ENCODE measurements at regions of chr11 and their contacts with region 1.

Region 1: GRCh38 chr11:6682936-6683861 is at the start of gene MRPL17:
- DNase-seq: peak; percentile 99
- total RNA-seq, gene MRPL17: 39.5 TPM

Region 2: DNA sequence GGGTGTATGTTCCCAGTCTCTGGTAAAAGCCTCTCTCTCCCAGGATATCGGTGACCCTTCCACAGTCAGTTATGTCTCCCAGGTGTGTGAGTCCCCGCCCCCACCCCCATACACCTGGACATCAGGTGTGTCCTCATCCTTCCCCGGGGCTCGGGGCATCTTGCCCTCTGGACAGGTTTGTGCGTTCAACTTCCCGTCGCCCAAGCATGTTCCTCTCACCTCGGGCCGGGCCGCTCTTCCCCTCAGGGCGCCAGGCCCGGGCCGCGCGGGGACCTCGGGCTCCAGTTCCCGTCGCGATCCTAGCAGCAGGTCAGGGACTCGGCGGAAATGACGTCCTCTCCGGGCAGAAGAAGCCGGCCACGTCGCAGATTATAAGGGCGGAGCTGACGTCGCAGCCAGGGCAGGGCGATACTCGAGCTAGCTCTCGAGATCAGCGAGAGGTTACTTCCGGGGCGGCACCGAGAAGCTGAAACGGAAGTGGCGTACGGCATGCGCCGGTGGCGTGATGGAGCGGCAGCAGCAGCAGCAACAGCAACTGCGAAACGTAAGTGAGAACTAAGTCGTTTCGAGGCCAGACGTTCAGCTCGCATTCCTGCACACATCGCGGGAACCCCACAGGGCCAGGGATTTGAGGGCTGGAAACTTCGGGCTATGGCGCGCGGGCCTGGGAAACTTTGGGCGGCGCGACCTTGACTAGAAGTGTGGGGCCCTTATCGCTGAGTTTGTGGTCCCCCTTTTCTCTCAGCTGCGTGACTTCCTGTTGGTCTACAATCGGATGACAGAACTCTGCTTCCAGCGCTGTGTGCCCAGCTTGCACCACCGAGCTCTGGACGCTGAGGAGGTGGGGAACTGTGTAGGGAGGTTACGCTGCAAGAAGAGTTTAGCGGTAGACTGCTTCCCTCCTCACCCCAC is 201.9 kb before region 1 on chr11 and contains the starts of genes ARFIP2 and TIMM10B:
- intact Hi-C with region 1: loop called (anchors 5 kb)
- DNase-seq: peak; percentile 100
- total RNA-seq, gene ARFIP2: 20.1 TPM
- total RNA-seq, gene TIMM10B: 21.7 TPM

Region 3: DNA sequence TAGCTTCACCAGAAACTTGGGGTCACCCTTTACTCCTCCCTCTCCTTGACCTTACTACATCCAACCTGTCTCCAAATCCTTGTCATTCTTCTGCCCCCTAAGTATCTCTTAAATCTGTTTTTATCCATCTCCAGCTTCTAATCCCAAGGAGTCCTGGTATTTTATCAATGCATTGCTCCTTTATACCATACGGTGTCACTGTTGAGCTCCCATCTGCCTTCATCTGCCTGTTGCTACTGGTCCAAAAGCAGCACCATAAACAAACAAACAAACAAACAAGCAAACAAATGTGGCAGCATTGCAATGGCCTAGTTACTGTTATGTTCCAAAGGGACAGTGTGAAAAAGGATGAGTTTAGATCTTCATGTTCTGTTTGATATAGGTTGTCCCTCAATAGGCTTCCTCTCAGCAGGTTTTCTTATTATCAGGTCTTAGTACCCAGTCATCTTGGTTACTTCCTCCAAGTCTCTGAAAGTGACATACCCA is 151.9 kb before region 1 on chr11:
- intact Hi-C with region 1: loop called (anchors 5 kb)
- DNase-seq: no peak

Region 4: DNA sequence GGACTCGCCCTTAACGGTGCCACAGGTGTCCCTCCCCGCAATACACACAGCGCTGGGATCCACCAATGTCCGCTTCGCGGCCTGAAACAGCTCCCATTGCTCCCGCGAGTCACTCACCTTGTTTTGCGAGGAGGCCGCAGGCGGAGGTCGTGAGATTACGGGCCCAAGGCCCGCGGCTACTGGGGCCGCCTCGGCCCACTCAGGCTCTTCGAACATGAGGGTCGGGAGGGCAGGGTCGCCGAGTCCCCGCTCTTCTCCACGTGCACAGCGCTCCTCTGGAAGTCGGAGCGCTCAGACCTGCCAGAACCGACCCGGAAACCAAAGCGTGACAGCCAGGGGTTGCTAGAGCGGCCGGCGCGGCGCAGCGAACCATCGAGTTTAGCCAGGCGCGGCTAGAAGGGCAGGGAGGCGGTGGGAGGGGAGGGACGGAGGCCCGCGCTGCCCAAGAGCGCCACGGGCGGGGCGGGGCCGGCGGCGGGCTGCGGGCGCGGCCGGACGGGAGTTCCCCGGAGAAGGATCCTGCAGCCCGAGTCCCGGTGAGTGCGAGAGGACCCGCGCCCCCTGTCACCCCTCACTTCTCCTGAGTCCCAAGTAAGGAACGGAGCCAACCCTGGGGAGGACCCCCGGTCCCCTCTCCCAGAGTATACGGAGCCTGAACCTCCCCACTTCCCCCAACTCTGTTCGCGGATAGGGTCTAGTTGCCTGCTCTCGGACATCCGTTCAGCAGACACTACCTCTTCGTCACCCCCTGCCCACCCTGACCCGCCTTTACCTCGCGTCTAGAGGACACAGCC is 79.7 kb before region 1 on chr11 and contains the starts of genes ILK and RRP8:
- intact Hi-C with region 1: loop called (anchors 1 kb)
- DNase-seq: peak; percentile 98
- total RNA-seq, gene ILK: 229 TPM
- total RNA-seq, gene RRP8: 21.3 TPM

Region 5: GRCh38 chr11:6612213-6613041 is 70.8 kb before region 1 on chr11 and contains the start of gene TAF10:
- intact Hi-C with region 1: loop called (anchors 2 kb)
- DNase-seq: peak; percentile 99
- total RNA-seq, gene TAF10: 126 TPM

Region 6: GRCh38 chr11:6705905-6706535 is 22.8 kb after region 1 on chr11:
- intact Hi-C with region 1: loop called (anchors 2 kb)
- DNase-seq: no peak